Adrenal gland (tissue), 19 donors: ENCODE measurements at regions of chr4 and their contacts with region 1.

Region 1: DNA sequence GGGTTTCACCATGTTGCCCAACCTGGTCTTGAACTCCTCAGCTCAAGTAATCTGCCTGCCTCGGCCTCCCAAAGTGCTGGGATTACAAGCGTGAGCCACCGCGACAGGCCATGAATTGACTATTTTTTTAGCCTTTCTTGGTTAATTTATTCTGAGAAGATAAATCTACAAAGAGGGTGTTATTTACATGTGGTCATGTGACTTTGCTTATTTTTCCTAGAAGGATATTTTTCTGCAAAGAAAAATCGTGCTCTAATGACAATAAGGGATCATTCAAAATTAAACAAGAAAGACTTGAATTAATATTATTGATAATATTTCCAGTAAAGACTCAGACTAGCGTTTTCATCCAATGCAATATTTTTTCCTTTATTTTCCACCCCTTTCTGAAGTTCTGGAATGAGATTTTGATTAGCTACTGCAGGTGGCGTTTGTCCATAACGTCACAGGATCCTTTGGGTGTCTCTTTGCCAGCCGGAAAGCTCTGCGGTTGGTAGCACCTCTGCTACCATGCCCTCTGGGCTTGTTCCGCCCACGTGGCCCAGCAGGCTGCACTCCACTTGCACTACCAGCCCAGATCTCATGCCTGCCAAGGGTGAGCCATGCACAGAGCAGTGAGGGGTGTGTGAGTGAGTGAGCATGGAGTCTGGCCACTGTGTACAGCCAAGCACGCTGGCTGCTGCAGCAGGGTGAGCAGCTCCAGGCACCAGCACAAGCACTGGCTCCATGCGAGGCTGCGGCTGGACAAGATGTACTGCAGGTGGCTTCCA is 6.4 kb upstream of the HNRNPD start:
- DNase-seq: peak in 1 of 7 donors; percentile 73
- H3K4me3 ChIP-seq: no peak overlapping the region
- H3K27ac ChIP-seq: no peak overlapping the region
- H3K4me1 ChIP-seq: peaks cover 0 to 11% of the 10 kb centered on the region in 2 donors
- H3K27me3 ChIP-seq: no peaks in the 10 kb centered on the region
- CTCF ChIP-seq: no peak
- POLR2A ChIP-seq: no peak

Region 2: DNA sequence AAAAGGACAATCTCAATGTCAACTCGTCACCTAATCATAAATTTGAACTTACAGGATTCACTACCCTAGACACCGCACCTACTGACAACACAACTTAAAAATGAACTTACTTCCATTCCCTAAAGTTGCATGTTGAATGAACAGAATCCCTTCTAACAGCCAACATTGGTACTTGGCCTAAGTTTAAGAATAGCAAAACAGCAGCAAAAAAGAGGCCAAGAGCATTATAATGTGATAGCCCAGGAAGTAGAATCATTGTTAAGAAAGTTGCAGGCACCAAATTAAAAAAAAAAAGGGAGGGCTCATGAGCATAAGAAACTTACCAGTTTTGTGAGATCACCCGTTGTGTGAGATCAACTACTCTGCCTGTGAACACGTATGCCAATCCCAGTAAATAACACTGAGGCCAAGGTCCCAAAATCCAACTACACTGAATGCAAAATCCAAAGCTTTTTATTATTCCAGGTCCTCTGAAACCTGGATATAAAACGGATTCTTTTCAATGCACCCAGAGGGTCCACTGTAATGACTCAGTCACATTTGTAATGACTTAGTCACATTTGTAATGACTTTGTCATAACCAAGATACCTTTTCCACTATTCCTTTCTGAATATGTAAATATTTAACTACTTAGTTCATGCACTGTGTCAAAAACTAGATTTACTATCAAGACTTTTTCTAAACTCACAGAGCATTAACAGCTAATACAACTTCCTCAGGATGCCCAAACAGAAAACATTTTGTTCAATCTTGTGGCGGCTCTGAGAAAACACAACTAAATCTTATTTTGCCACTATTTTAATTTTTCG is 43.3 kb after region 1 on chr4:
- intact Hi-C with region 1: loop called in 1 of 2 experiments (anchors 5 kb)
- DNase-seq: no peak
- H3K4me3 ChIP-seq: no peak overlapping the region
- H3K27ac ChIP-seq: no peak overlapping the region
- H3K4me1 ChIP-seq: peaks cover 13 to 38% of the 10 kb centered on the region in 2 donors
- H3K27me3 ChIP-seq: no peaks in the 10 kb centered on the region
- CTCF ChIP-seq: no peak
- POLR2A ChIP-seq: no peak